ENCODE measurements at regions of chr12 and their contacts with region 1.

Region 1: DNA sequence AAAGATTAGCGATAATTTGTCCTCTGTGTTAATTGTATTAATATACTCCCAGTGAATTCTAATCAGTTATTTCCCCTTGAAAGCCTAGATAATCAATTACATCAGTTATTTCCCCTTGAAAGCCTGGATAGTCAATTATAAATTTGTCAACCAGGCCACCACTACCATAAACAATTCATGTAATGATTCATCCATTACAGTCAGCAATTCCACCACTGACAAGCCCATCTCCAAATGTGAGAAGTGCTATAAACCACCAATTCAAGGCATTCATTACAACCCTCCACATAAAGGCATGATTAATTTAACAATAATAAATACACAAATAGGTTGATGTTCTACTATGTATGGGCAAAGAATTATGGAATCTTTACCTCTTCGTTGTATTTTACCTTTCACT is 40.9 kb downstream of the INTS13 start:
- DNase-seq: no peak
- ATAC-seq: no peak
- H3K4me3 Mint-ChIP-seq: no peak overlapping the region
- H3K27ac Mint-ChIP-seq: no peak overlapping the region
- H3K4me1 Mint-ChIP-seq: no peaks in the 10 kb centered on the region
- H3K27me3 Mint-ChIP-seq: no peaks in the 10 kb centered on the region
- CTCF ChIP-seq: no peak

Region 2: DNA sequence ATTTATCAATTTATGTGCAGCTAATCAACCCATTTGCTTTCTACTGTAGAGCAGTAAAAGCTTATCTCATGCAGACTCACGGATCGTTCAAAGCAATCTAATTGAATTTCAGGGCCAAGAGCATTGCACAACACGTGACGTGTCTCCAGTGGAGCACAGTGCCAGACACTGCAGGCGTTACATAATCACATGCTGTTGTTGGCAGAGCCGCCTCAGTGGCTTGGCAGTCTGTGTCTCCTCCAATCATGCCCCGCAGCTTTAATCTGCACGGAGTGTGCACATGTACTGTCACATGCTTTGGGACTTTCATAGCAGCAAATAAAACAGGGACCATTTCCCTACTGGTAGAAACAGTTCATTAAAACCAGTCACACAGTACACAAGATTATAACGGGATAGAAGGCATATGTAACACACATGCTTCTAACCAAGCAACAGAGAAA is 373.2 kb before region 1 on chr12:
- CTCF ChIA-PET with region 1: no interaction called
- POLR2A ChIA-PET with region 1: interaction called, 10 read pairs
- intact Hi-C with region 1: no loop called
- DNase-seq: no peak
- ATAC-seq: no peak
- H3K4me3 Mint-ChIP-seq: no peak overlapping the region
- H3K27ac Mint-ChIP-seq: no peak overlapping the region
- H3K4me1 Mint-ChIP-seq: peaks cover 20% of the 10 kb centered on the region
- H3K27me3 Mint-ChIP-seq: no peaks in the 10 kb centered on the region
- CTCF ChIP-seq: no peak

Measured in activated B cell treated with CpG ODN at 0.5 μM for 24 hours (primary cell).